ENCODE measurements at regions of chr13 and their contacts with region 1.

Region 1: GRCh38 chr13:45370922-45371406 is 30.0 kb upstream of the TPT1 start:
- DNase-seq: peak; percentile 33 to 87 (median 69)
- ATAC-seq: peak; percentile 82 to 91 (median 86)
- H3K4me3 ChIP-seq: no peak overlapping the region
- H3K27ac ChIP-seq: no peak overlapping the region
- H3K4me1 ChIP-seq: peaks cover 0 to 3% (median 0%) of the 10 kb centered on the region in 3 donors
- H3K27me3 ChIP-seq: no peaks in the 10 kb centered on the region
- CTCF ChIP-seq: peak; percentile 84 to 96 (median 94)

Region 2: DNA sequence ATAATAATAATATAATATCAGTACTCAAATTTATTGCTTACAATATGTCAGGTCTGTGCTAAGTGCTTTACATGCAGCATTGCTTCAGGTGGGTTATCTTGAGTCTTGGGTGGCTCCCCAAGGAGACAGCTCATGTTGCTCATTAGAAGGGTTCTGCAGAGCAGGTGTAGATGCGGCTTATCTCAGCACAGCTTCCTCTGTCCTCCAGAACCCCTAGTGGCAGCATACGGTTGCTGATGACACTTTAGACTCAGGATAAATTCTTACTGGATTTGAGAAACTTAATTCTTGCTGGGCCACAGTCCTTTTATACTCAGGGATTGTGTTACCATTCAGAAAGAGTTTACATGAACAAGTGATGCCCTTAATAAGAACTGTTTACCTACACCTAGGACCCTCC is 102.7 kb after region 1 on chr13:
- intact Hi-C with region 1: loop called in 1 of 3 experiments (anchors 10 kb)
- DNase-seq: no peak
- ATAC-seq: peak in 2 of 4 donors; percentile 25 to 44
- H3K4me3 ChIP-seq: no peak overlapping the region
- H3K27ac ChIP-seq: no peak overlapping the region
- H3K4me1 ChIP-seq: peaks cover 4 to 24% (median 21%) of the 10 kb centered on the region in 3 donors
- H3K27me3 ChIP-seq: no peaks in the 10 kb centered on the region
- CTCF ChIP-seq: no peak

Region 3: DNA sequence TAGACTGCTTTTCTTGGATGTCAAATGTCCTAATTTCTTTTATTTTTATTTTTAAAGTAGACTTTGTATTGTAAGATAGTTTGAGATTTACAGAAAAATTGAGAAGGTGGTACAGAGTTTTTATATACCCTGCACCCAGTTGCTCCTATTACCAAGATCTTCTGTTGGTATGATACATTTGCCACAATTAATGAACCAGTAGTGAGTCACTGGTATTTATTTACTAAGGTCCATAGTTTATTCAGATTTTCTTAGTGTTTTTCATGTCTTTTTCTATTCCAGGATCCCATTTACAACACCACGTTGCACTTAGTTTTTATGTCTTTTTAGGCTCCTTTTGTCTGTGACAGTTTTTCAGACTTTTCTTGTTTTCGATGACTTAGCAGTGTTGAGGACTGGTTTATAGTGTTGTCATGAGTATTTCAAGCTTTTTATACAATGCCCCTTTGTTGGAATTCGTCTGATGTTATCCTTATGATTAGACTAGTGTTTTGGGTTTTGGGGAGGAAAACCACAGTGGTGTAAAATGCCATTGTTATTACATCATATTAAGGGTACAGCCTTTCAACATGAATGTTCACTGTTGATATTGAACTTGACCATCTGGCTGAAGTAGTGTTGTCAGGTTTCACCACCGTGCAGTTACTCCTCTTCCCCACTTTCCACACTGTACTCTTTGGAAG is 129.7 kb after region 1 on chr13:
- intact Hi-C with region 1: loop called in 1 of 3 experiments (anchors 10 kb)
- DNase-seq: no peak
- ATAC-seq: peak in 3 of 4 donors; percentile 41 to 64 (median 57)
- H3K4me3 ChIP-seq: no peak overlapping the region
- H3K27ac ChIP-seq: peak overlapping the region in 2 of 4 donors; percentile 1 to 18
- H3K4me1 ChIP-seq: peaks cover 5 to 15% (median 7%) of the 10 kb centered on the region in 3 donors
- H3K27me3 ChIP-seq: no peaks in the 10 kb centered on the region
- CTCF ChIP-seq: no peak